Activated CD4-positive, alpha-beta T cell treated with anti-CD3 and anti-CD28 coated beads for 36 hours (primary cell): ENCODE measurements at regions of chr6 and their contacts with region 1.

Region 1: DNA sequence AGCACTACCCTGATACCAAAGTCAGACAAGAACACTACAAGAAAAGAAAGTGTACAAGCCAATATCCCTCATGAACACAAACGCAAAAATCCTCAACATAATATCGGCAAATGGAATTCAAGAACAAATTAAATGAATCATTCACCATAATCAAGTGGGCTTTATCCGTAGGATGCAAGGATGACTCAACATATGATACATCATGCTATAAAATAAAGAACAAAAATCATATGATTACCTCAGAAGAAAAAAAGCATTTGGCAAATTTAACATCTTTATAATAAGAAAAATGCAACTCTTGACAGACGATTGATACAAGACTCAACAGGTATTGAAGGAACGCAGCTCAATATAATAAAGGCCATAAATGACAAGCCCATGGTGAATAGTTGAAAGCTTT is 843.9 kb downstream of the FRK start:
- DNase-seq: no peak
- ATAC-seq: no peak
- H3K4me3 Mint-ChIP-seq: no peak overlapping the region
- H3K27ac Mint-ChIP-seq: no peak overlapping the region
- H3K4me1 Mint-ChIP-seq: no peaks in the 10 kb centered on the region
- H3K27me3 Mint-ChIP-seq: no peaks in the 10 kb centered on the region

Region 2: GRCh38 chr6:115441651-115442050 is 224.8 kb after region 1 on chr6:
- CTCF ChIA-PET with region 1: no interaction called
- POLR2A ChIA-PET with region 1: no interaction called
- intact Hi-C with region 1: no loop called
- DNase-seq: no peak
- ATAC-seq: no peak
- H3K4me3 Mint-ChIP-seq: no peak overlapping the region
- H3K27ac Mint-ChIP-seq: no peak overlapping the region
- H3K4me1 Mint-ChIP-seq: no peaks in the 10 kb centered on the region
- H3K27me3 Mint-ChIP-seq: no peaks in the 10 kb centered on the region

Region 3: GRCh38 chr6:115969207-115969929 is 752.5 kb after region 1 on chr6:
- CTCF ChIA-PET with region 1: no interaction called
- POLR2A ChIA-PET with region 1: no interaction called
- intact Hi-C with region 1: loop called in 1 of 2 experiments (anchors 5 kb)
- DNase-seq: no peak
- ATAC-seq: no peak
- H3K4me3 Mint-ChIP-seq: no peak overlapping the region
- H3K27ac Mint-ChIP-seq: no peak overlapping the region
- H3K4me1 Mint-ChIP-seq: no peaks in the 10 kb centered on the region
- H3K27me3 Mint-ChIP-seq: peaks cover 8% of the 10 kb centered on the region